Mucosa of descending colon (tissue), 3 donors: ENCODE measurements at regions of chr3 and their contacts with region 1.

Region 1: GRCh38 chr3:181709537-181710279 is 2.0 kb upstream of the SOX2 start:
- DNase-seq: peak in 2 of 3 donors; percentile 78 to 92
- ATAC-seq: peak; percentile 66
- H3K4me3 ChIP-seq: no peak overlapping the region
- H3K4me1 ChIP-seq: peaks cover 13% of the 10 kb centered on the region
- CTCF ChIP-seq: peak; percentile 56

Region 2: GRCh38 chr3:181567311-181568075 is 142.2 kb before region 1 on chr3:
- intact Hi-C with region 1: no loop called
- DNase-seq: no peak
- ATAC-seq: no peak
- H3K4me3 ChIP-seq: no peak overlapping the region
- H3K4me1 ChIP-seq: no peaks in the 10 kb centered on the region
- CTCF ChIP-seq: no peak

Region 3: GRCh38 chr3:181660337-181660736 is 49.4 kb before region 1 on chr3:
- intact Hi-C with region 1: no loop called
- DNase-seq: no peak
- ATAC-seq: no peak
- H3K4me3 ChIP-seq: no peak overlapping the region
- H3K4me1 ChIP-seq: no peaks in the 10 kb centered on the region
- CTCF ChIP-seq: no peak

Region 4: GRCh38 chr3:182258538-182259177 is 549.0 kb after region 1 on chr3:
- intact Hi-C with region 1: loop called (anchors 10 kb)
- DNase-seq: peak in 1 of 3 donors; percentile 7
- ATAC-seq: no peak
- H3K4me3 ChIP-seq: no peak overlapping the region
- H3K4me1 ChIP-seq: no peaks in the 10 kb centered on the region
- CTCF ChIP-seq: no peak

Region 5: DNA sequence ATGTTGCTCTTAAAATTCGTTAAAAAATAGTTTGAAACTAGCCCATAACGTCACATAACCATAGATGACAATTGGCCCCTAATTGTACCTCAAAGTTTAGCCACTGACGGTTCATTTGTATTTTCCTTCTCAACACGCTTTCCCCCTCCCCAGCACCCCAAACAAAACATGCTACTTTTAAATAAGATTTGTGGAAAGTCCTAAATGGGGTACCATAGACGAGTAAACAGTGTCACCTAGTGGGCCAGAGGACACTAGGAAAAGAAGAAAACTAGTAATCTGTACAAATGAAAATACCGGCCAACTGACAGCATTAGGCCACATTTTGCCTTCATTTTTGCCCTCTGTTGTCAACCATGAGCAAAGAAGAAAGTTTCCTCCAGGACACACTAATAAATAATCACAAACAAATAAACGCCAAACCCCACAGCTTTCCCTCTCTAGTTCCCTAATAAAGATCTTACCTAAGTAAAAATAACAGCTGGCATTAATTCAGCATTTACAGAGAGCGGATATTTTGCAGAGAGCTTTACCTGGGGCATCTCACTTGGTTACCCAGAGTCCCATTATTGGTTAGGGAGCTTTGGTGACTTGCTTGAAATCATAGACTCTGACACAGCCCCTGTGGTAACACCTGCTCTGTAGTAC is 908.5 kb after region 1 on chr3:
- intact Hi-C with region 1: loop called in 1 of 2 experiments (anchors 5 kb)
- DNase-seq: peak in 1 of 3 donors; percentile 61
- ATAC-seq: peak; percentile 74
- H3K4me3 ChIP-seq: no peak overlapping the region
- H3K4me1 ChIP-seq: no peaks in the 10 kb centered on the region
- CTCF ChIP-seq: no peak

Region 6: GRCh38 chr3:182686033-182686886 is 976.6 kb after region 1 on chr3:
- intact Hi-C with region 1: loop called in 1 of 2 experiments (anchors 5 kb)
- DNase-seq: no peak
- ATAC-seq: peak; percentile 46
- H3K4me3 ChIP-seq: no peak overlapping the region
- H3K4me1 ChIP-seq: peaks cover 26% of the 10 kb centered on the region
- CTCF ChIP-seq: no peak